Endothelial cell of umbilical vein (primary cell): ENCODE measurements at regions of chr12 and their contacts with region 1.

Region 1: DNA sequence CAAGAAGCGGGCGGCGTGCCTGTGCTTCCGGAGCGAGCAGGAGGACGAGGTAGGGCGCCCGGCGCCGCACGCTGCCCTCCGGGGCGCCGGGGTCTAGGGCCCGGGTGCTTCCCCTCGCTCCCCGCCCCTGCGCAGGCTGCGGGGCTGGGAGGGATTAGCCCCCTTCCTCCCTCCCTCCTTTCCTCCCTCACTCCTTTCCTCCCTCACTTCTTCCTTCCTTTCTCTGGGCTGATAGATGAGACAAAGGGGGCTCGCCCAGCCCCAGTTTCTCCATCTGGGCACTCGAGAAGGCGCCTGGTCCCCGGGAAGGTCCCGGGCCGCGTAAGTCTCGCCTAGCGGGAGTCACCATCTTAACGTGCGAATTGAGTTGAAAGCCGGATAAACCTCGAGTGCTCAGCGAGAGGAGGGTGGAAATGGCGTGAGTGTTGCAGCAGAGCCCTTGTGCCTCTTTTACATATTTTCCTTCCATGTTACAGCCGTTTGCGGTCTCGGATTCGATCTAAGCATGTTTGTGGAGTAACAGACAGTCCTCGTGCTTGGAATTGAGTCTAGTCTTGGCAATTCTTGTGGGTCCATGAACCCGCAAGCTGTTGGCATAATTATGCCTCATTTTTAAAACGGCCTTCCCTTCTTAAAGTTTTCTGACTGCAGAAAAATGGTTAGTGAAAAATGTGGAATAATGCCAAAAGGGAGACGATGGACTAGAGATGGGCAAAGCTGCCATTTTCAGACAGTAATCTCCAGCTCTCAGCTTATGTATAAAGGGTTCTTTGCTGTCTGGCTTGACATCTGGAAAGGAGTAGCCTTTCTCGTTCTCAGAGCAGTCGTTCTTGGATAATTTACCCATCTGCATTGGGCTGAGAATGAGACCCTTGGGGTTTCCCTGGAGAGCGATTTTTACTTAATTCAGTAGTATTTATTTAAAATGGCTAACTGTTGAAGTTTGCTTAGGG is 924 bp downstream of the NUDT4 start:
- DNase-seq: peak; percentile 52
- H3K4me3 ChIP-seq: peak overlapping the region; percentile 71 to 99 (median 95)
- H3K27ac ChIP-seq: peak overlapping the region; percentile 79
- H3K4me1 ChIP-seq: peaks cover 29% of the 10 kb centered on the region
- H3K27me3 ChIP-seq: no peaks in the 10 kb centered on the region
- CTCF ChIP-seq: no peak
- POLR2A ChIP-seq: no peak

Region 2: DNA sequence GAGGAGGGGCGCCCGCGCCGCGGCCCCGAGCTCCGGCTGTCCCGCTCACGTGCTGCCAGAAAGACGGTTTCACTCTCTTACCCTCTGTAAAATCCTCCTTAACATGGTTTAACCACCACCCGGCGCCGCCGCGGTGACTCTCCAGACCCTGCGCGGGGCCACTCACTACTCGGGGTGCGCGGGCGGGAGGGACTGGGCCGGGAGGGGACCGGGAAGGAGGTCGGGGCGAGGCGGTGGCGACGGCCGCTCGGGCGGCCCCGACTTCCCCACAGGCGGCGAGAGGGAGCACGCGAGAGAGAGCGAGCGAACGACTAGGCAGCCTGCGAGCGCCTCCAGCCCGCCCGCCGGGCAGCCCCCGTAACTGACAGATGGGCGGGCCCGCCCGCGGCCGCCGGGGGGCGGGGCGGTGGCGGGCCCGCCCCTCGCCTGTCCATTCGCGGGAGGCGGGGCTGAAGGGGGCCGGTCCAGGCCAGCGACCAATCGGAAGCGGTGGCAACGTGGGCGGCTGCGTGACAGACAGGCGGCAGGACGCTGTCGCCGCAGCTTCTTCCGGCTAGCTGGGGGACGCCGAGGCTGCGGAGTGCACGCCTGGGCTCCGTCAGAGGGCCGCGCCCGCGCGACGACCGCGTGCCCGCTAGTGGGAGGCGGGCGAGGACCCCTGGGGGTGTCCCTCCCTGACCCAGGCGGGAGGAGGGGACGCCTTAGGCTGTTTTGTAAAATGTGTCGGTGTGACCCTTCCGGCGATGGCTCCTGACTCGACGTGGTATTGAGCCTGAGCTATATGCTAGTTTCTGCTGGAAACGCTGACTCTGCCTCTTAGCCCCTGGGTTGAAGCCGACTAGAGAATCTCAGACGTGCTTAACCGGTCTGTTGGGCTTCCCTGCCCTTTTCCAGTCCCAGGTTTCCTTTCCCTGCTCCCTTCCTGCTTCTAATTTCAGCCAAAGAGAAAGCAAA is 449.4 kb before region 1 on chr12 and contains the start of gene EEA1:
- CTCF ChIA-PET with region 1: interaction called, 5 read pairs
- POLR2A ChIA-PET with region 1: no interaction called
- dilution Hi-C with region 1: no loop called
- intact Hi-C with region 1: loop called (anchors 1 kb)
- DNase-seq: peak; percentile 96
- H3K4me3 ChIP-seq: peak within 1 kb of the TSS; percentile 91 to 97 (median 95)
- H3K27ac ChIP-seq: peak within 1 kb of the TSS; percentile 90
- H3K4me1 ChIP-seq: peaks cover 17% of the 10 kb centered on the region
- H3K27me3 ChIP-seq: no peaks in the 10 kb centered on the region
- CTCF ChIP-seq: peak in 1 of 2 donors; percentile 34
- POLR2A ChIP-seq: peak; percentile 83
- total RNA-seq, gene EEA1: 37.9 and 38.8 TPM in 2 replicates

Region 3: DNA sequence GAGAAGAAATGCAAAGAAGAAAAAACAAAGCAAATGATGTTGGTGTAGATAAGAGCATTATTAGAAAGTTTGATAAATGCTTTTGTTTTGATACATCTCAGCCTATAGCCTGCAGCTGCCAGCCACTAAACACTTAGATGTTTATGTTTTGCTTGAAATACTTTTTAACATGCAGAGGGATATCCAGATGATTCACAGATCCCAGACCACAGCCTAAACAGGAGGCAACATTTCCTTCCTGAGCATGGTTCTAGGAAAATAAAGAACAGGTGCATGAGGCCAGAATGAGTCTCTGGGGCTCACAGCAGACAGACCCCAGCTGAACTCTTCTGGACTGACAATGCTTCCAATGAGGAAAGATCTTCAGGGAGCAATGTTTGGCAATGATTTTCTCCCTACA is 345.9 kb before region 1 on chr12:
- CTCF ChIA-PET with region 1: interaction called, 3 read pairs
- POLR2A ChIA-PET with region 1: no interaction called
- dilution Hi-C with region 1: no loop called
- intact Hi-C with region 1: loop called (anchors 2 kb)
- DNase-seq: peak; percentile 98
- H3K4me3 ChIP-seq: no peak overlapping the region
- H3K27ac ChIP-seq: peak overlapping the region; percentile 82
- H3K4me1 ChIP-seq: peaks cover 19% of the 10 kb centered on the region
- H3K27me3 ChIP-seq: no peaks in the 10 kb centered on the region
- CTCF ChIP-seq: no peak
- POLR2A ChIP-seq: peak; percentile 60

Region 4: GRCh38 chr12:93109551-93110203 is 269.0 kb before region 1 on chr12:
- CTCF ChIA-PET with region 1: no interaction called
- POLR2A ChIA-PET with region 1: no interaction called
- dilution Hi-C with region 1: no loop called
- intact Hi-C with region 1: loop called (anchors 1 kb)
- DNase-seq: no peak
- H3K4me3 ChIP-seq: no peak overlapping the region
- H3K27ac ChIP-seq: no peak overlapping the region
- H3K4me1 ChIP-seq: peaks cover 31% of the 10 kb centered on the region
- H3K27me3 ChIP-seq: no peaks in the 10 kb centered on the region
- CTCF ChIP-seq: no peak
- POLR2A ChIP-seq: no peak

Region 5: GRCh38 chr12:93397412-93397811 is 18.8 kb after region 1 on chr12:
- CTCF ChIA-PET with region 1: interaction called, 12 read pairs
- POLR2A ChIA-PET with region 1: no interaction called
- dilution Hi-C with region 1: no loop called
- intact Hi-C with region 1: no loop called
- DNase-seq: no peak
- H3K4me3 ChIP-seq: no peak overlapping the region
- H3K27ac ChIP-seq: no peak overlapping the region
- H3K4me1 ChIP-seq: no peaks in the 10 kb centered on the region
- H3K27me3 ChIP-seq: no peaks in the 10 kb centered on the region
- CTCF ChIP-seq: no peak
- POLR2A ChIP-seq: no peak

Region 6: DNA sequence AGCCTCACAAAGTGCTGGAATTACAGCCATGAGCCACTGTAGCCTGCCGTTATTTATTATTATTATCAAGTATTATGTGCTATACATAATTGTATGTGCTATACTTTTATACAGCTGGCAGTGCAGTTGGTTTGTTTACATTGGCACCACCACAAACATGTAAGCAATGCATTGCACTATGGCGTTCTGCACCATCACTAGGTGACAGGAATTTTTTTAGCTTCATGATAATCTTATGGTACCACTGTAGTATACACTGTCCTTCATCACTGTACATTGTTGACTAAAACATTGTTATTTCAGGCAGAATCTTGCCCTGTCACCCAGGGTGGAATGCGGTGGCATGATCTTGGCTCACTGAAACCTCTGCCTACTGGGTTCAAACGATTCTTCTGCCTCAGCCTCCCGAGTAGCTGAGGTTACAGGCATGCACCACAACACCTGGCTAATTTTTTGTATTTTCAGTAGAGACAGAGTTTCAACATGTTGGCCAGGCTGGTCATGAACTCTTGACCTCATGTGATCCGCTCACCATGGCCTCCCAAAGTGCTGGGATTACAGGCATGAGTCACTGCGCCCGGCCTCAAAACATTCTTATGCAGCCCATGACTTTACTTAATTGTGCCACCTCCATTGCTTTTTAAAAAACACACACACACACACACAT is 105.8 kb after region 1 on chr12:
- CTCF ChIA-PET with region 1: no interaction called
- POLR2A ChIA-PET with region 1: no interaction called
- dilution Hi-C with region 1: no loop called
- intact Hi-C with region 1: no loop called
- DNase-seq: no peak
- H3K4me3 ChIP-seq: no peak overlapping the region
- H3K27ac ChIP-seq: no peak overlapping the region
- H3K4me1 ChIP-seq: no peaks in the 10 kb centered on the region
- H3K27me3 ChIP-seq: no peaks in the 10 kb centered on the region
- CTCF ChIP-seq: no peak
- POLR2A ChIP-seq: no peak